Naive thymus-derived CD4-positive, alpha-beta T cell (primary cell): ENCODE measurements at regions of chr11 and their contacts with region 1.

Region 1: GRCh38 chr11:2992234-2992996 is at the start of gene NAP1L4:
- DNase-seq: peak; percentile 88 to 97 (median 95)
- ATAC-seq: peak; percentile 93
- H3K4me3 ChIP-seq: peak within 1 kb of the TSS; percentile 93
- H3K4me3 Mint-ChIP-seq: peak within 1 kb of the TSS; percentile 94 to 100 (median 98)
- H3K27ac ChIP-seq: peak within 1 kb of the TSS; percentile 90
- H3K27ac Mint-ChIP-seq: peak within 1 kb of the TSS; percentile 92 to 99 (median 97)
- H3K4me1 ChIP-seq: peaks cover 2 to 4% of the 10 kb centered on the region in 2 donors
- H3K4me1 Mint-ChIP-seq: peaks cover 23 to 36% (median 27%) of the 10 kb centered on the region in 7 donors
- H3K27me3 ChIP-seq: no peaks in the 10 kb centered on the region
- H3K27me3 Mint-ChIP-seq: no peaks in the 10 kb centered on the region
- total RNA-seq, gene NAP1L4: 245 to 356 (median 294) TPM

Region 2: DNA sequence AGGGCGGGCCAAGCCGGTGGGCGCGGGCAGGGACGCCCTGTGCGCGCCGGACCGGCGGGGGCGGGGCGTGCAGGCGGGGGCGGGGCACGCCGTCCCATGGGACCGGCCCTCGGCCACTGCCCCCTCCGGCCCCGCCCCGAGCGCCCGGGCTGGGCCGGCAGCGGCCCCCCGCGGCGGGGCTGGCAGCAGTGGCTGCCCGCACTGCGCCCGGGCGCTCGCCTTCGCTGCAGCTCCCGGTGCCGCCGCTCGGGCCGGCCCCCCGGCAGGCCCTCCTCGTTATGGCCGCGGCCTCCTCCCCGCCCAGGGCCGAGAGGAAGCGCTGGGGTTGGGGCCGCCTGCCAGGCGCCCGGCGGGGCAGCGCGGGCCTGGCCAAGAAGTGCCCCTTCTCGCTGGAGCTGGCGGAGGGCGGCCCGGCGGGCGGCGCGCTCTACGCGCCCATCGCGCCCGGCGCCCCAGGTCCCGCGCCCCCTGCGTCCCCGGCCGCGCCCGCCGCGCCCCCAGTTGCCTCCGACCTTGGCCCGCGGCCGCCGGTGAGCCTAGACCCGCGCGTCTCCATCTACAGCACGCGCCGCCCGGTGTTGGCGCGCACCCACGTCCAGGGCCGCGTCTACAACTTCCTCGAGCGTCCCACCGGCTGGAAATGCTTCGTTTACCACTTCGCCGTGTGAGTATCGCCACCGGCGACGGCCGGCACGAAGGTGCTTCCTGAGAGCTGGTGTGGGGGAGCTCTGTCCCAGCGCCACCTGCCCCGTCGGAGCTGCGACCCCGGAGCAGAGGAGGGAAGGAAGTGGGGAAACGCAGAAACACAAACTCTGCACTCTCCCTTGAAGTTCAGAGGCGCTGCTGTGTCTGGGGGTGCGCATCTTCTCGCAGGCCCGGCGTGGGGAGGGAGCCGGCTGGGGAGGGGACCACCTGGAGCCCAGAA is 547.3 kb before region 1 on chr11 and contains the start of gene KCNQ1:
- CTCF ChIA-PET with region 1: no interaction called
- POLR2A ChIA-PET with region 1: no interaction called
- intact Hi-C with region 1: loop called in 1 of 2 experiments (anchors 5 kb)
- DNase-seq: peak in 8 of 9 donors; percentile 26 to 75 (median 46)
- ATAC-seq: peak; percentile 74
- H3K4me3 ChIP-seq: peak within 1 kb of the TSS; percentile 71
- H3K4me3 Mint-ChIP-seq: peak within 1 kb of the TSS; percentile 93 to 99 (median 96)
- H3K27ac ChIP-seq: peak within 1 kb of the TSS; percentile 52
- H3K27ac Mint-ChIP-seq: peak within 1 kb of the TSS; percentile 73 to 92 (median 89)
- H3K4me1 ChIP-seq: peaks cover 22 to 56% of the 10 kb centered on the region in 2 donors
- H3K4me1 Mint-ChIP-seq: peaks cover 22 to 53% (median 41%) of the 10 kb centered on the region in 7 donors
- H3K27me3 ChIP-seq: no peaks in the 10 kb centered on the region
- H3K27me3 Mint-ChIP-seq: peaks cover 0 to 20% (median 0%) of the 10 kb centered on the region in 5 donors
- total RNA-seq, gene KCNQ1: 14.7 to 46.4 (median 41.4) TPM

Region 3: DNA sequence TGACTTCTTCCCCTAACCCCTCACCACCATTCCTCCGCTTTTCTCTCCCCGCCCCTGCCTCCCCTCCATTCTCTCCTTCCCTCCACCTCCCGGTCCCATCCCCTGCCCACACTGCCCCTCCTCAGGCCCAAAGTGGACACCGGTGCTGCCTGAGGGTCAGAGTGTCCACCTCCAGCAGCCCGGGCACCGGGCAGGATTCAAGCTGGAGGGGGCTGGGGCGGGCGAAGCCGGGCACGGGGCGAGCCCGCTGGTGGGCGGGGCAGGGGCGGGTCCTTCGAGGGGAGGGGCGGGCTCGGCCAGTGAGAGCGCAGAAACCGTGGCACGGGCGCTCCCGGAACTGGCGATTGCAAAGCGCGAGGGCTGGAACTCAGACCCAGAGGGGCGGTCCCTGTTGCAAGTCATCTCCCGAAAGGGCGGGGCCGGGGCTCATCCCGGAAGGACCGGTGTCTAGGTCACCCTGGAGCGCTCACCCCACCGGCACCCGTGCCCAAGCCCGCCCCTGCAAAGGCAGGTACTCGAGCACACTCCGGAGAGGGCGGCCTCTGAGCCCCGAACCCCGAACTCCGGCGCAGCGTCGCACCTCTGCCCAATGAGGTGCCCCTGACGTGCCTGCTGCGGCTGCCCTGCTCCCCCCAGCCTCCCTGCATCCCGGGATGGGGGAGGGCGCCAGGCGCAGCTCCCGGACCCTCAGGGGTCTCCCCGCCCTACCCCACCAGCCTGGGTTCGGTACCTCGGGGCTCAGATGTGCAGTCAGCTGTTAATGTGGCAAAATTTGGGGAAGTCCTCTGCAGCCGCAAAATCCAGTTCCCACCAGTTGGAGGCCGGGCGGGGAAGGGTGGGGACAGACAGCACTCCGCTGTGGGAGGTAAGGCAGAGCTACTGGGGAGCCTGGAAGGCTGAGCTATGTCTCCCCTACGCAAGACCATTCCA is 90.3 kb before region 1 on chr11:
- CTCF ChIA-PET with region 1: no interaction called
- POLR2A ChIA-PET with region 1: no interaction called
- intact Hi-C with region 1: loop called in 1 of 2 experiments (anchors 1 kb)
- DNase-seq: peak; percentile 69 to 92 (median 76)
- ATAC-seq: peak; percentile 91
- H3K4me3 ChIP-seq: peak overlapping the region; percentile 66
- H3K4me3 Mint-ChIP-seq: peak overlapping the region; percentile 43 to 82 (median 78)
- H3K27ac ChIP-seq: peak overlapping the region; percentile 65
- H3K27ac Mint-ChIP-seq: peak overlapping the region in 8 of 9 donors; percentile 38 to 83 (median 70)
- H3K4me1 ChIP-seq: peaks cover 32 to 35% of the 10 kb centered on the region in 2 donors
- H3K4me1 Mint-ChIP-seq: peaks cover 42 to 55% (median 44%) of the 10 kb centered on the region in 7 donors
- H3K27me3 ChIP-seq: no peaks in the 10 kb centered on the region
- H3K27me3 Mint-ChIP-seq: no peaks in the 10 kb centered on the region

Region 4: DNA sequence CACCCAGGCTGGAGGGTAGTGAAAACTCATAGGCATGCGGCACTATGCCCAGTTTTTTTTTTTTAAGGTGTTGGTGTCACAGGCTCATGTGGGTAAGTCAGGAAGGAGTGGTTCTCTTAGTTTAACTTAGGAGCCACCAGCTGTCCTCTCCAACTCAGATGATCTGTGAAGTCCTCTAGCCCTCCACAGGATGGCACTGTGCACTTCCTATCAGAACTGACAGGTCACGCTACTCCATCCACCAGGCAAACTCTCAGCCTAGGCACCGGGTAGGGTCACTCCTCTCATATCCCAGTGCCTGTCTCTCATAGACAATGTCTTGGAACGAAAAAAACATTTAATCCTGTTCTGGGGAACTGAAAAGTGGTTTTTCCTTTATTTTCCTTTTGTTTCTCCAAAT is 16.8 kb before region 1 on chr11:
- CTCF ChIA-PET with region 1: interaction called, 10 read pairs
- POLR2A ChIA-PET with region 1: interaction called, 25 read pairs
- intact Hi-C with region 1: loop called (anchors 1 kb)
- DNase-seq: peak in 8 of 9 donors; percentile 26 to 68 (median 48)
- ATAC-seq: peak; percentile 95
- H3K4me3 ChIP-seq: no peak overlapping the region
- H3K4me3 Mint-ChIP-seq: no peak overlapping the region
- H3K27ac ChIP-seq: no peak overlapping the region
- H3K27ac Mint-ChIP-seq: peak overlapping the region in 3 of 9 donors; percentile 24 to 66 (median 41)
- H3K4me1 ChIP-seq: peaks cover 0 to 7% of the 10 kb centered on the region in 2 donors
- H3K4me1 Mint-ChIP-seq: peaks cover 21 to 51% (median 37%) of the 10 kb centered on the region in 7 donors
- H3K27me3 ChIP-seq: no peaks in the 10 kb centered on the region
- H3K27me3 Mint-ChIP-seq: no peaks in the 10 kb centered on the region

Region 5: DNA sequence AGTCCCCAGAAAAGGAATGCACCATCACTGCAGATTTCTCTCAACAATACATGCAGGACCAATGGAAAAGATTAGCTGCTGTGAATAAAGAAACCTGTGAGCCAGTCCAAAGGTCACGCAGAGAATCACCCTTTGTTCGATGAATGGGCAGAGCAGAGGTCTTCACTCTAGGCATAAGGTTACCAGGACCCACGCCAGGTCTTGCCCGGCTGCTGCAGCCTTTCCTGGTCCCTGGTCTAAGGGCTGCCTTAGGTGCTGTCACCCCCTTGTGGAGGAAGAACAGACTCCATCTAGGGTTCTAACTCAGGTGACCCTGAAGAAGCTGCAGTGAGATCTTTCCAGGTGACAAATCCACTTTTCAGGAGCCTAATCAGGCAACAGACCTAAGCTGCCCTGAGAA is 28.7 kb after region 1 on chr11:
- CTCF ChIA-PET with region 1: interaction called, 5 read pairs
- POLR2A ChIA-PET with region 1: interaction called, 142 read pairs
- intact Hi-C with region 1: loop called (anchors 1 kb)
- DNase-seq: peak in 7 of 9 donors; percentile 37 to 60 (median 48)
- ATAC-seq: peak; percentile 81
- H3K4me3 ChIP-seq: no peak overlapping the region
- H3K4me3 Mint-ChIP-seq: no peak overlapping the region
- H3K27ac ChIP-seq: no peak overlapping the region
- H3K27ac Mint-ChIP-seq: peak overlapping the region in 2 of 9 donors; percentile 38 to 78
- H3K4me1 ChIP-seq: peaks cover 0 to 27% of the 10 kb centered on the region in 2 donors
- H3K4me1 Mint-ChIP-seq: peaks cover 21 to 54% (median 46%) of the 10 kb centered on the region in 7 donors
- H3K27me3 ChIP-seq: no peaks in the 10 kb centered on the region
- H3K27me3 Mint-ChIP-seq: no peaks in the 10 kb centered on the region

Region 6: GRCh38 chr11:3378426-3379423 is 386.3 kb after region 1 on chr11 and contains the start of gene ZNF195:
- CTCF ChIA-PET with region 1: no interaction called
- POLR2A ChIA-PET with region 1: no interaction called
- intact Hi-C with region 1: loop called (anchors 1 to 2 kb)
- DNase-seq: peak; percentile 91 to 97 (median 95)
- ATAC-seq: peak; percentile 100
- H3K4me3 ChIP-seq: peak within 1 kb of the TSS; percentile 96
- H3K4me3 Mint-ChIP-seq: peak within 1 kb of the TSS; percentile 95 to 100 (median 98)
- H3K27ac ChIP-seq: peak within 1 kb of the TSS; percentile 90
- H3K27ac Mint-ChIP-seq: peak within 1 kb of the TSS; percentile 93 to 98 (median 98)
- H3K4me1 ChIP-seq: peaks cover 17 to 23% of the 10 kb centered on the region in 2 donors
- H3K4me1 Mint-ChIP-seq: peaks cover 30 to 67% (median 61%) of the 10 kb centered on the region in 7 donors
- H3K27me3 ChIP-seq: no peaks in the 10 kb centered on the region
- H3K27me3 Mint-ChIP-seq: no peaks in the 10 kb centered on the region
- total RNA-seq, gene ZNF195: 18.4 to 39.0 (median 33.7) TPM